ENCODE measurements at regions of chr6 and their contacts with region 1.

Region 1: DNA sequence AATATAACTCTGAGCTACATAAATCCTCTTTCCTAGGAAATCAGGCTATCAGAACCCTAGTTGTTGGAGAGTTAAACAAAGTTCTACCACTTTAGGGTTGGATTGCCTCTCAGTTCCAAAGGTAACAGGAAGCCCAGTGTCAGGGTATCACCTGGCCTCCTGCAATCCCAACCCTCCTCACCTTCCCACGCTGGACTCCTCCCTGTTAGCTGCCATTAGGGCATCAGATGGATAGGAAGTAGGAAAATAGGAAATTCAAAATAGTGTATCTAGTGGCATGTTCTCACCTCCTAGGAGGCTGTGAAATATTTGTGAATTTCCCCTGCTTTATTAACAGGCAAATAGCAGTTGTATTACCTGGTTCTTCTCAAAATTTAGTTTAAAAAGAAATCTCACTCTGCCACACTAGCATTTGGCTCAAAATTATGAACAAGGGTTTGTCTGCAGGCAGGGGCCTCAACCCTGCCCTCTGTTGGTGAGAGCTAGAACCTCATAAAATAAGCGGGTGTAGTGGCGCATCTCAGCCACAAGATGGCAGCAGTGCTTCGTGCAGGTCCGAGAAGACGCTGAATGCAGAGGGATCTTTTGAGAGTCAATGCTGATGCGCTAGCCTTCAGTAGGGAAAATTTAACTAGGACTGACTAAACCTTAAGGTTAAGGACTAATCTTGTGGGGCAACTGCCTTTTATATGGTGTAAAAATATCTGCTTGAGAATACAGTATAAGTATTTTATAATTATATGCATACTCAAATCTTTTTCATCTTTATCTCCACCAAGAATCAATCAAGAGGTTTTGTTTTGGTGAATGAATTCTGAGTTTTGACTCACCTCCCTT is 209.8 kb upstream of the KCNQ5 start:
- DNase-seq: peak; percentile 81
- ATAC-seq: peak; percentile 95
- H3K4me3 ChIP-seq: no peak overlapping the region
- H3K27ac ChIP-seq: no peak overlapping the region
- H3K4me1 ChIP-seq: peaks cover 2% of the 10 kb centered on the region; the same call in 1 of the 2 replicates
- H3K27me3 ChIP-seq: no peaks in the 10 kb centered on the region
- CTCF ChIP-seq: peak; percentile 100; the same call in 1 of the 2 replicates
- POLR2A ChIP-seq: peak; percentile 76; the same call in 1 of the 2 replicates
- RAD21 ChIP-seq: peak; percentile 100

Region 2: GRCh38 chr6:72246926-72247325 is 165.2 kb before region 1 on chr6:
- CTCF ChIA-PET with region 1: no interaction called
- POLR2A ChIA-PET with region 1: no interaction called
- dilution Hi-C with region 1: no loop called
- in situ Hi-C with region 1: no loop called
- intact Hi-C with region 1: loop called (anchors 1 kb)
- DNase-seq: peak; percentile 15
- ATAC-seq: peak; percentile 49
- H3K4me3 ChIP-seq: no peak overlapping the region
- H3K27ac ChIP-seq: no peak overlapping the region
- H3K4me1 ChIP-seq: peaks cover 2% of the 10 kb centered on the region; the same call in 1 of the 2 replicates
- H3K27me3 ChIP-seq: no peaks in the 10 kb centered on the region
- CTCF ChIP-seq: no peak
- POLR2A ChIP-seq: no peak
- RAD21 ChIP-seq: no peak

Region 3: DNA sequence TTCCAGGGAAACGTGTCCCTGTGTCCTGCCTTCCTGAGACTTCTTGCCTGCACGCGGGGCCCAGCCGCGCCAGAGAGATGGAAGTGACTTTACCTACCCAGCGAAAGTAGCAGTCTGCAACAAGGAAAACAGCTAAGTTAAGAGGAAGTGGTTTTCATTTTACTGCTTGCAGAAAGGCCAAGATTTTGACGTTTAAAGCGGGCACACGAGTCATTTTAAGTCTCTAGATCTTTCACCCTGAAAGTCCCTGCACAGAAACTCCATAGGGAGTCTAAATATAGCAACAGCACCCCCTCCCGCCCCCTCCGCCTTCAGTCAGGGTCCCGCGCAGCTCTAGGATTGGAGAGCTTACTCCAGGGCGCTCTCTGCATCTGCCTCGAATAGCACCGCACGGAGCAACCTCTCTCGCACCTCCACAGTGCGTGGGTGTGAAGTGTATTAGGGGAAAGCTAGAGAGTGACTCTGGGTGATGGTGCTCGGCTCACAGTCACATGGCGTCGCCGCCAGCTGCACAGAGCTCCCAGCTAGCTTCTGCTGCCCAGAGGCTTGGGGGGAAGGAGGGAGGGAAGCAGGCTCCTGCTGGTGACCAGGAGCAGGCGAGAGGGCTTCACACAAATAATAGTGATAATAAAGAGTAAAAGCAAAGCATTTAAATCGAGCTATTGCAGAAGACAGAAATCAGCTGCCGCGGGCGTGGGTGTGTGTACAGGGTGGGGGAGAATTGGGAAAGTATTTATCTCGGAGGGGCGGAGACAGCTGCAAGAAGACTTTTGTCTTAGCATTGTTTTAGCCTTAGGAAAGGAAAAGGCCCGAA is 208.0 kb after region 1 on chr6:
- CTCF ChIA-PET with region 1: interaction called, 3 read pairs
- POLR2A ChIA-PET with region 1: no interaction called
- dilution Hi-C with region 1: no loop called
- in situ Hi-C with region 1: no loop called
- intact Hi-C with region 1: loop called (anchors 1 kb)
- DNase-seq: peak; percentile 45
- ATAC-seq: peak; percentile 9
- H3K4me3 ChIP-seq: peak overlapping the region; percentile 27
- H3K27ac ChIP-seq: no peak overlapping the region
- H3K4me1 ChIP-seq: 0 out of 2 replicates have a peak, but pooled peaks cover 2% of the 10 kb centered on the region
- H3K27me3 ChIP-seq: no peaks in the 10 kb centered on the region
- CTCF ChIP-seq: no peak
- POLR2A ChIP-seq: no peak
- RAD21 ChIP-seq: no peak

Region 4: DNA sequence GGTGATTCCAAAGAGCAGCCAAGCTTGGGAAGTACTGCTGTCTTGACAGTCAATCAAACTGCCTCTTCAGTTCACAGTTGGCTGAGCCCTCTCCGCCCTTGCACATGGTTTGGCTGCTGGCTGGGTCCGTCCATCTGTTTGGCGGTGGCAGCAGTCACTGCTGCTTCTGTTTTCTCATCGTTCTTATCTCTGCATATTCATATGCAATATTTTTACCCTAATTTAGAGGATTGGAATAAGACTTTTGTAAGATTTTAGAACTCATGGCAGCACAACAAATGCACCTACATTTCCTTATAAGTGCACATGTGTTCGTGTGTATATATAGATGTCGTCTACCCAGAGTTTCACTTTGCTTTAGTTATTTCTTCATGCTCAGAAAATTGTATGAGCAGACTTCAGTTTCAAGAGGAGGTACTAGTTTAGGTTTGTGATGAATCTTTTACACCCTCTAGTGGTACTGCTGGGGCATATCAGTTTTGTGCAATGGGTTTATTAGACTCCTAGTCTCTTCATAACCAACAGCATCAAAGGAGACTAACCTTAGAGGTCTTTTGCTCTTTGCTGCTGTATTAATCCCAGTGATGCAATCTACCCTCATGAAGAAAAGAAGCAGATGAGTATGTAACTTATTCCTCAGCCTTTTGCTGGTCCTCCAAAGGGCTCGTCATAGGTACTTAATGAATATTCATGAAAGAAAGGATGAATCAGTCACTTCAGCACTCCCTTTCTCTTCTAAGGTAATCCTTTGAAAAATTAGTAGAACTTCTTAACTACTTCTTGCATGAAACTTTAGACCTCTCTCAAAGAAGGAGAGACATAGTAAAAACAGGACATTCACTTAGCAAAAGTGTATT is 768.9 kb after region 1 on chr6:
- CTCF ChIA-PET with region 1: interaction called, 3 read pairs
- POLR2A ChIA-PET with region 1: interaction called, 3 read pairs
- dilution Hi-C with region 1: no loop called
- in situ Hi-C with region 1: loop called (anchors 5 kb)
- intact Hi-C with region 1: loop called (anchors 1 kb)
- DNase-seq: peak; percentile 84
- ATAC-seq: peak; percentile 98
- H3K4me3 ChIP-seq: peak overlapping the region; percentile 42
- H3K27ac ChIP-seq: no peak overlapping the region
- H3K4me1 ChIP-seq: 0 out of 2 replicates have a peak, but pooled peaks cover 2% of the 10 kb centered on the region
- H3K27me3 ChIP-seq: peaks cover 2% of the 10 kb centered on the region
- CTCF ChIP-seq: peak; percentile 90
- POLR2A ChIP-seq: no peak
- RAD21 ChIP-seq: peak; percentile 91

Region 5: DNA sequence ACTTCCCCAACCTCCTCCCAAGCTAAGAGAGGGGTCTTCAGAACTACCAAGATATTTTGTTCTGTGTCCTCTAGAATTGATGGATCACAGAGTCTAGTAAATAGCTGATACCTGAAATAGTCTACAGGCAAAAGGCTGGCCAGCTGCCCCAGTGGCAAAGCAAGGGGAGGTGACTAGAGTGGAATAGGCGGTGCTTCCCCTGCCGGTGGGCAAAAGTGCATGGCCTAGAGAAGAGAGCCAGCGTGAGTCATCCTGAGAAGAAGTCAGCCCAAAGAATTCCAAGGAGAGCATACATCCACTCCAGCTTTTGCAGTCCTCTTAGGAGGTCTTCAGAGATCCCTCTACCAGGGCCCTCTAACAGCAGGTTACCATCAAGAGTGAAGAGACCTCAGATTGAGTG is 927.3 kb after region 1 on chr6:
- CTCF ChIA-PET with region 1: no interaction called
- POLR2A ChIA-PET with region 1: no interaction called
- dilution Hi-C with region 1: no loop called
- in situ Hi-C with region 1: loop called (anchors 25 kb)
- intact Hi-C with region 1: no loop called
- DNase-seq: no peak
- ATAC-seq: no peak
- H3K4me3 ChIP-seq: no peak overlapping the region
- H3K27ac ChIP-seq: no peak overlapping the region
- H3K4me1 ChIP-seq: peaks cover 2% of the 10 kb centered on the region; the same call in 1 of the 2 replicates
- H3K27me3 ChIP-seq: peaks cover 6% of the 10 kb centered on the region
- CTCF ChIP-seq: no peak
- POLR2A ChIP-seq: no peak
- RAD21 ChIP-seq: no peak